ENCODE measurements at regions of chr1 and their contacts with region 1.

Region 1: GRCh38 chr1:6701437-6702153 is at the start of gene DNAJC11:
- DNase-seq: peak; percentile 80 to 95 (median 88)
- ATAC-seq: peak; percentile 98
- H3K4me3 ChIP-seq: peak within 1 kb of the TSS; percentile 86
- H3K4me3 Mint-ChIP-seq: peak within 1 kb of the TSS; percentile 96
- H3K27ac ChIP-seq: peak within 1 kb of the TSS in 1 of 2 donors; percentile 60
- H3K27ac Mint-ChIP-seq: peak within 1 kb of the TSS; percentile 76
- H3K4me1 ChIP-seq: peaks cover 18% of the 10 kb centered on the region
- H3K4me1 Mint-ChIP-seq: peaks cover 43% of the 10 kb centered on the region
- H3K27me3 ChIP-seq: no peaks in the 10 kb centered on the region
- H3K27me3 Mint-ChIP-seq: no peaks in the 10 kb centered on the region
- CTCF ChIP-seq: peak; percentile 55
- total RNA-seq, gene DNAJC11: 20.6 to 24.0 TPM

Region 2: DNA sequence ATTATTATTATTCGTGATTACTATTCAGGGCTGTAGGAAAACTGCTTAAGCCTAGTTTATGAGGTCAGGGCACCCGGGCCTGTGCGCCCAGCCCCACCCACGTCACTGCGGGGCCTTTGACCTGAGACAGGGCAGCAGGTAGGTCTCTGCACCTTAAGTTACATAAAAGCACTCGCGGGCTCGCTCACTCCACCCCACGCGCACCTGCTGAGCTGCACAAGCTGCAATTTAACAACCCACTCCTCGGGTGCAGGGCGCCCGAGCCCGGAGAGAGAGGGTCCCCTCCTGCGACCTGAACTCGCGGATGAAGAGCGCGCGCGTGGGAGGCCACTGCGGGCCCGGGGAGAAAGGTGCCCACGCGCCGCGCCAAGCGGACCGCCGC is 466.3 kb before region 1 on chr1:
- CTCF ChIA-PET with region 1: no interaction called
- POLR2A ChIA-PET with region 1: no interaction called
- intact Hi-C with region 1: loop called in 1 of 2 experiments (anchors 10 kb)
- DNase-seq: peak in 3 of 14 experiments; percentile 30 to 49 (median 35)
- ATAC-seq: peak; percentile 17
- H3K4me3 ChIP-seq: peak overlapping the region; percentile 81
- H3K4me3 Mint-ChIP-seq: peak overlapping the region; percentile 94
- H3K27ac ChIP-seq: no peak overlapping the region
- H3K27ac Mint-ChIP-seq: peak overlapping the region; percentile 64
- H3K4me1 ChIP-seq: peaks cover 18% of the 10 kb centered on the region
- H3K4me1 Mint-ChIP-seq: peaks cover 15% of the 10 kb centered on the region
- H3K27me3 ChIP-seq: peaks cover 5% of the 10 kb centered on the region in 2 experiments
- H3K27me3 Mint-ChIP-seq: peaks cover 13% of the 10 kb centered on the region
- CTCF ChIP-seq: no peak

Region 3: GRCh38 chr1:6260961-6261614 is 440.5 kb before region 1 on chr1 and contains the start of gene GPR153:
- CTCF ChIA-PET with region 1: no interaction called
- POLR2A ChIA-PET with region 1: no interaction called
- intact Hi-C with region 1: no loop called
- DNase-seq: peak in 8 of 14 experiments; percentile 17 to 76 (median 45)
- ATAC-seq: peak; percentile 63
- H3K4me3 ChIP-seq: peak within 1 kb of the TSS; percentile 46
- H3K4me3 Mint-ChIP-seq: peak within 1 kb of the TSS; percentile 80
- H3K27ac ChIP-seq: no peak within 1 kb of the TSS
- H3K27ac Mint-ChIP-seq: no peak within 1 kb of the TSS
- H3K4me1 ChIP-seq: peaks cover 18% of the 10 kb centered on the region
- H3K4me1 Mint-ChIP-seq: peaks cover 4% of the 10 kb centered on the region
- H3K27me3 ChIP-seq: peaks cover 12 to 13% of the 10 kb centered on the region in 2 experiments
- H3K27me3 Mint-ChIP-seq: peaks cover 11% of the 10 kb centered on the region
- CTCF ChIP-seq: no peak
- total RNA-seq, gene GPR153: 0.14 to 0.19 TPM

Region 4: GRCh38 chr1:6445062-6445763 is 256.4 kb before region 1 on chr1:
- CTCF ChIA-PET with region 1: no interaction called
- POLR2A ChIA-PET with region 1: no interaction called
- intact Hi-C with region 1: no loop called
- DNase-seq: peak in 10 of 14 experiments; percentile 35 to 71 (median 44)
- ATAC-seq: peak; percentile 16
- H3K4me3 ChIP-seq: no peak overlapping the region
- H3K4me3 Mint-ChIP-seq: no peak overlapping the region
- H3K27ac ChIP-seq: no peak overlapping the region
- H3K27ac Mint-ChIP-seq: no peak overlapping the region
- H3K4me1 ChIP-seq: peaks cover 51% of the 10 kb centered on the region
- H3K4me1 Mint-ChIP-seq: peaks cover 27% of the 10 kb centered on the region
- H3K27me3 ChIP-seq: peaks cover 41 to 55% of the 10 kb centered on the region in 2 experiments
- H3K27me3 Mint-ChIP-seq: peaks cover 47% of the 10 kb centered on the region
- CTCF ChIP-seq: peak; percentile 39